HepG2 (cell line): ENCODE measurements at regions of chr22 and their contacts with region 1.

Region 1: GRCh38 chr22:22884010-22884887 is 3.4 kb upstream of the IGLL5 start:
- DNase-seq: peak; percentile 42
- ATAC-seq: peak; percentile 87
- H3K4me3 ChIP-seq: no peak overlapping the region
- H3K27ac ChIP-seq: no peak overlapping the region
- H3K4me1 ChIP-seq: no peaks in the 10 kb centered on the region
- H3K27me3 ChIP-seq: peaks cover 2 to 25% of the 10 kb centered on the region in 2 experiments; a peak in 4 of 5 replicates
- CTCF ChIP-seq: peak; percentile 77
- EP300 ChIP-seq: no peak
- POLR2A ChIP-seq: no peak
- RAD21 ChIP-seq: peak; percentile 69

Region 2: GRCh38 chr22:22753526-22754267 is 130.6 kb before region 1 on chr22:
- CTCF ChIA-PET with region 1: no interaction called
- POLR2A ChIA-PET with region 1: no interaction called
- in situ Hi-C with region 1: loop called (anchors 10 kb)
- intact Hi-C with region 1: no loop called
- DNase-seq: peak; percentile 47
- ATAC-seq: peak; percentile 95
- H3K4me3 ChIP-seq: no peak overlapping the region
- H3K27ac ChIP-seq: no peak overlapping the region
- H3K4me1 ChIP-seq: no peaks in the 10 kb centered on the region
- H3K27me3 ChIP-seq: peaks cover 0 to 2% of the 10 kb centered on the region in 2 experiments; a peak in 2 of 5 replicates
- CTCF ChIP-seq: peak; percentile 84
- EP300 ChIP-seq: no peak
- POLR2A ChIP-seq: no peak
- RAD21 ChIP-seq: no peak

Region 3: GRCh38 chr22:22810018-22810427 is 74.2 kb before region 1 on chr22:
- CTCF ChIA-PET with region 1: no interaction called
- POLR2A ChIA-PET with region 1: no interaction called
- in situ Hi-C with region 1: no loop called
- intact Hi-C with region 1: loop called (anchors 2 kb)
- DNase-seq: peak; percentile 50
- ATAC-seq: peak; percentile 97
- H3K4me3 ChIP-seq: no peak overlapping the region
- H3K27ac ChIP-seq: no peak overlapping the region
- H3K4me1 ChIP-seq: no peaks in the 10 kb centered on the region
- H3K27me3 ChIP-seq: peaks cover 0 to 25% of the 10 kb centered on the region in 2 experiments; a peak in 3 of 5 replicates
- CTCF ChIP-seq: peak; percentile 89
- EP300 ChIP-seq: no peak
- POLR2A ChIP-seq: no peak
- RAD21 ChIP-seq: peak; percentile 55; the same call in 1 of the 2 replicates

Region 4: DNA sequence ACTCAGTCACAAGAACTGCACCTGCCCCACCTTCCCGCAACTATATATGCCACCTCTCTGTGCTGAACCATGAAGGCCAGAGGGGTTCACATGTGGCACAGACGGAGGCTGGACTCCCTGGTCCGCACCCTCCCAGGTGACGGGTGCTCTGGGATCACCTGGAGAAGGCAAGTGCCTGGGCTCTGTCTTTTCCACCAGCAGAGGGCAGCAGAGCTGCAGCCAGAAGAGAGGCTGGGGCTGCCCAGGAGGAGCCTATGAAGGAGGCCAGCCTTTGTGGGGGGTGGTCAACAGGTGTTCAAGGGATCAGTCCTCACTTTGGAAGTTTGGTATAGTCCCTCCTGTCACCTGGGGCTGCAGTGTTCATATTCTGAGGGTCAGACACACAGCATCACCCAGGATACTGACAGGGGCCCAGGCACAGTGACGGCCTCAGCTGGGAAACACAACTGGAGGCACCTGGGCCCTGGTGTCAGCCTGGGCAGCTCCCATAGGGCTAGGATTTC is 35.8 kb before region 1 on chr22:
- CTCF ChIA-PET with region 1: interaction called, 12 read pairs
- POLR2A ChIA-PET with region 1: no interaction called
- in situ Hi-C with region 1: loop called (anchors 5 kb)
- intact Hi-C with region 1: loop called (anchors 1 kb)
- DNase-seq: peak; percentile 50
- ATAC-seq: peak; percentile 98
- H3K4me3 ChIP-seq: no peak overlapping the region
- H3K27ac ChIP-seq: no peak overlapping the region
- H3K4me1 ChIP-seq: no peaks in the 10 kb centered on the region
- H3K27me3 ChIP-seq: peaks cover 0 to 30% of the 10 kb centered on the region in 2 experiments; a peak in 3 of 5 replicates
- CTCF ChIP-seq: peak; percentile 94
- EP300 ChIP-seq: no peak
- POLR2A ChIP-seq: no peak
- RAD21 ChIP-seq: peak; percentile 62; the same call in 1 of the 2 replicates

Region 5: DNA sequence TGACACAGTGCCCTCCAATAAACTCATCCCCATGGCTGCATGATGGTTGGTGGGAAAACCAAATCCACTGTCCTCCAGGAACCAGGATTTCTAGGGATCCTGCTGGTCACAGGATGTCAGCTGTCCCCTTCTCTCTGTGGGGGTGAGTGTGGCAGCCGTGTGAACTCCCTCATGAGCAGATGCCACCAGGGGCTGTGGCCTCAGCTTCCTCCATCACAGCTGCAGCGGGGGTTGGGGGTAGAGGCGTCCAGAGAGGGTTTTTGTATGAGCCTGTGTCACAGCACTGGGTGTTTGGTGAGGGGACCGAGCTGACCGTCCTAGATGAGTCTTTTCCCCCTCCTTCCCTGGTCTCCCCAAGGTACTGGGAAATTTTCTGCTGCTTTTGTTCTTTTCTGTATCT is 29.7 kb after region 1 on chr22:
- CTCF ChIA-PET with region 1: no interaction called
- POLR2A ChIA-PET with region 1: no interaction called
- in situ Hi-C with region 1: no loop called
- intact Hi-C with region 1: no loop called
- DNase-seq: no peak
- ATAC-seq: no peak
- H3K4me3 ChIP-seq: no peak overlapping the region
- H3K27ac ChIP-seq: no peak overlapping the region
- H3K4me1 ChIP-seq: peaks cover 23% of the 10 kb centered on the region
- H3K27me3 ChIP-seq: peaks cover 1 to 59% of the 10 kb centered on the region in 2 experiments; a peak in 4 of 5 replicates
- CTCF ChIP-seq: no peak
- EP300 ChIP-seq: no peak
- POLR2A ChIP-seq: no peak
- RAD21 ChIP-seq: no peak